Head of caudate nucleus (tissue), 42 donors: ENCODE measurements at regions of chr19 and their contacts with region 1.

Region 1: GRCh38 chr19:2869618-2870017 is 2.5 kb downstream of the ZNF556 start:
- DNase-seq: no peak

Region 2: GRCh38 chr19:2648528-2648937 is 221.1 kb before region 1 on chr19:
- intact Hi-C with region 1: loop called (anchors 5 kb)
- DNase-seq: peak; percentile 77 to 95 (median 88)

Region 3: GRCh38 chr19:2661615-2662014 is 208.0 kb before region 1 on chr19:
- intact Hi-C with region 1: no loop called
- DNase-seq: no peak

Region 4: GRCh38 chr19:2702162-2703076 is 167.2 kb before region 1 on chr19 and contains the start of gene GNG7:
- intact Hi-C with region 1: no loop called
- DNase-seq: peak; percentile 86 to 100 (median 97)